ENCODE measurements at regions of chr11 and their contacts with region 1.

Region 1: DNA sequence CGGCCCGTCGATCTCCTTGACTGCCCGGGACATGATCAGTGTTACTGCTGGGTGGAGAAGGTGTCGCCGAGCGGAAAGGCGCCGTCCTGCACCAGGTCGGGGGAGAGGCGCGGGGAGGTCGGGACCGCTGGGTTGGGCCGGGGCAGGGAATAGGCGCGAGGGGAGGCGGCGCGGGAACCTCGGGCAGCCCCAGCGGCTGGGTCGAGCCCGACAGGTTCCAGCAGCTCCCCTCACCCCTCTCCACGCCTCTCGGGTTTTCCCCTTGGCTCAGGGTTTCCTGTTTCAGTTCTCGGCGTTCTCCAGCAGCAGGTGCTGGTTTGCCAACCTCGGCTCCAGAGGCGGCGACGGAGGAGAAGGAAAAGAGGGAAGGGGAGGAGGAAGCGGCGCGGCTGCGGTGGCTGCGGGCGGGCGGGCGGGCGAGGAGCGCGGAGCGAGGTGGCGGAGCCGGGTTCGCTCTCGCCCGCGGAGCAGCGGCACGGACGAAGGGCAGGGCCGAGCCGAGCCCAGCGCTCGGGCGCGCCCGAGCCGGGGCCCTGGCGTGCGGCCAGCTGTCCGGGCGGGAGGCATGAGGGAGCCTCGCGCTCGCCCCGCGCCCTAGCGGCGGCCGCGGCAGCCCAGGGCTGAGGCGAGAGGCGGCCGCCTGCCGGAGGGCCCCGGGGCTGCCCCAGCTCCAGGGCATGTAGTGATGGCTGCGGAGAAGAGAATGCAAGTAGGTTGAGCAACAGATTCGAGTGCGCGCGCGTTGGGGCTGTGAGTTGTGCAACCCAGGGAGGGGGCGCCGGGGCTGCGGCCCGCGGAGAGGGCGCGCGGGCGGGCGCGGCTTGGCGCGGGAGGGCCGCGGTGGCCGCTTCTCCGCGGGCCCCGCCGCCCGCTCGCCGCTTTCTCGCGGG is at the start of gene ZC3H12C:
- DNase-seq: peak; percentile 79 to 83 (median 80)
- ATAC-seq: peak; percentile 95
- H3K4me3 ChIP-seq: peak within 1 kb of the TSS; percentile 62
- H3K27ac ChIP-seq: peak within 1 kb of the TSS; percentile 69; the same call in 2 of the 3 replicates
- H3K4me1 ChIP-seq: peaks cover 4 to 15% of the 10 kb centered on the region in 2 experiments; a peak in 4 of 5 replicates
- H3K27me3 ChIP-seq: peaks cover 0 to 3% of the 10 kb centered on the region in 2 experiments; a peak in 2 of 5 replicates
- CTCF ChIP-seq: peak; percentile 36 to 97 (median 72); a peak in 5 of 6 replicates
- EP300 ChIP-seq: no peak
- POLR2A ChIP-seq: no peak
- RAD21 ChIP-seq: peak; percentile 50 to 74
- polyA plus RNA-seq, gene ZC3H12C: 0.56 to 0.69 TPM

Region 2: DNA sequence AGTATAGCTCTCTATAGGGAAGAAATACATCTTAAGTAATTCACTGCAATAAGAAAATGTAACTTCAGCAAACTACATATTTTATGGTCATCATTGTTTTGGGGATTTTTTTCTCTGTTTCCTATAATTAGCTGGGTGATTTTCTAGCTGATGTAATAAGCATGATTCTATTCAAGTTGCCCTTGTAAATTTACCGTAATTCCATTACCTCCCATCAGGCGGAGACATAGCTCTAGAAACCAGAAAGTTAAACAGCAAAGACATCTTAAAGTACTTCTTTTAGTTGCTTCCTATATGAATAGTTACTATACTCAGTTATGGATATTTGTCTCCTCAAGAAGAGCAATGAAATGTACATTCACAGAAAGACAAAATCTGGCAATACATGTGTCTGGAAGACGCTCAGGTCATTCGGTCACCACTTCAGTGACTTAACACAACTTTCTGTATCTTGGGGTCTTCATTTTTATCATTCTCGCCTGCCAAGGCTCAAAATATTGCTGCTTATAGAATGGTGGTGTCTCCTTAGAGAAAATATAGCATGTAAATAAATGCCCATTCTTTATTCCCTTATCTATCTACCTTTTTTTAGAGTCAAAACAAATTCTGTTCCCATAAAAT is 239.5 kb before region 1 on chr11:
- CTCF ChIA-PET with region 1: interaction called, 3 read pairs
- POLR2A ChIA-PET with region 1: no interaction called
- in situ Hi-C with region 1: no loop called
- intact Hi-C with region 1: loop called (anchors 10 kb)
- DNase-seq: peak; percentile 13 to 60 (median 26)
- ATAC-seq: peak; percentile 85
- H3K4me3 ChIP-seq: no peak overlapping the region
- H3K27ac ChIP-seq: no peak overlapping the region
- H3K4me1 ChIP-seq: peaks cover 0 to 3% of the 10 kb centered on the region in 2 experiments; a peak in 1 of 5 replicates
- H3K27me3 ChIP-seq: no peaks in the 10 kb centered on the region
- CTCF ChIP-seq: peak; percentile 57 to 88 (median 63)
- EP300 ChIP-seq: no peak
- POLR2A ChIP-seq: no peak
- RAD21 ChIP-seq: peak; percentile 91 to 97

Region 3: GRCh38 chr11:109946322-109946846 is 146.4 kb before region 1 on chr11:
- CTCF ChIA-PET with region 1: no interaction called
- POLR2A ChIA-PET with region 1: no interaction called
- in situ Hi-C with region 1: no loop called
- intact Hi-C with region 1: loop called (anchors 1 kb)
- DNase-seq: peak; percentile 59 to 87 (median 66)
- ATAC-seq: peak; percentile 99
- H3K4me3 ChIP-seq: no peak overlapping the region
- H3K27ac ChIP-seq: peak overlapping the region; percentile 43; the same call in 2 of the 3 replicates
- H3K4me1 ChIP-seq: no peaks in the 10 kb centered on the region; a peak in 1 of 5 replicates
- H3K27me3 ChIP-seq: no peaks in the 10 kb centered on the region
- CTCF ChIP-seq: peak; percentile 80 to 94 (median 90)
- EP300 ChIP-seq: peak; percentile 51
- POLR2A ChIP-seq: no peak
- RAD21 ChIP-seq: peak; percentile 95 to 96

Region 4: GRCh38 chr11:110069158-110069737 is 23.5 kb before region 1 on chr11:
- CTCF ChIA-PET with region 1: no interaction called
- POLR2A ChIA-PET with region 1: interaction called, 3 read pairs
- in situ Hi-C with region 1: no loop called
- intact Hi-C with region 1: loop called (anchors 2 kb)
- DNase-seq: peak in 2 of 4 experiments; percentile 55 to 80
- ATAC-seq: peak; percentile 83
- H3K4me3 ChIP-seq: no peak overlapping the region
- H3K27ac ChIP-seq: peak overlapping the region; percentile 80
- H3K4me1 ChIP-seq: peaks cover 4 to 37% of the 10 kb centered on the region in 2 experiments; a peak in 4 of 5 replicates
- H3K27me3 ChIP-seq: no peaks in the 10 kb centered on the region
- CTCF ChIP-seq: no peak
- EP300 ChIP-seq: peak; percentile 80
- POLR2A ChIP-seq: peak; percentile 38; the same call in 1 of the 2 replicates
- RAD21 ChIP-seq: no peak